ENCODE measurements at regions of chr4 and their contacts with region 1.

Region 1: GRCh38 chr4:89101256-89102161 is 9.8 kb upstream of the TIGD2 start:
- DNase-seq: no peak
- H3K4me3 Mint-ChIP-seq: no peak overlapping the region
- H3K27ac Mint-ChIP-seq: peak overlapping the region; percentile 48
- H3K4me1 Mint-ChIP-seq: peaks cover 25% of the 10 kb centered on the region
- H3K27me3 Mint-ChIP-seq: peaks cover 3% of the 10 kb centered on the region

Region 2: DNA sequence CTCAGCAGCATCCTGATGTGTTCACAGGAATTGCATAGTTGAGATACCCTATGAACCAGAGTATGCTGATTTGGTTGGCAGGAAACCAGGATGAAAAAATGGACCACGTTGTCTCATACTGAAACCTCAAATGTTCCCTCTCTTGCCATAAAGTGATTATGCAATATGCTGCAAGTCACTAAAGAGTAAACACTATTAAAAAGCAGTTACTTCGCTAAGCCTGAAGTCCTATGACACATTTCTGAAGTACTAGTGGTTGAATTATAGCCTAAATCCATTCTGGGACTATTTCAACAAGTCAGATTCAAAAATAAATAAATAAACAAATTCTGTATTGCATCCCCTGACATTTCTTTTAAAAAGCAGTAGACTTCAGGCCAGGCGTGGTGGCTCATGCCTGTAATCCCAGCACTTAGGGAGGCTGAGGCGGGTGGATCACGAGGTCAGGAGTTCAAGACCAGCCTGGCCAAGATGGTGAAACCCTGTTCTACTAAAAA is 297.9 kb before region 1 on chr4:
- CTCF ChIA-PET with region 1: no interaction called
- intact Hi-C with region 1: loop called (anchors 1 kb)
- DNase-seq: peak; percentile 60
- H3K4me3 Mint-ChIP-seq: no peak overlapping the region
- H3K27ac Mint-ChIP-seq: no peak overlapping the region
- H3K4me1 Mint-ChIP-seq: peaks cover 22% of the 10 kb centered on the region
- H3K27me3 Mint-ChIP-seq: no peaks in the 10 kb centered on the region

Region 3: GRCh38 chr4:89055157-89056080 is 46.1 kb before region 1 on chr4:
- CTCF ChIA-PET with region 1: no interaction called
- intact Hi-C with region 1: loop called (anchors 1 kb)
- DNase-seq: no peak
- H3K4me3 Mint-ChIP-seq: no peak overlapping the region
- H3K27ac Mint-ChIP-seq: no peak overlapping the region
- H3K4me1 Mint-ChIP-seq: peaks cover 32% of the 10 kb centered on the region
- H3K27me3 Mint-ChIP-seq: peaks cover 7% of the 10 kb centered on the region

Region 4: GRCh38 chr4:89077761-89078160 is 23.7 kb before region 1 on chr4:
- CTCF ChIA-PET with region 1: no interaction called
- intact Hi-C with region 1: loop called (anchors 1 kb)
- DNase-seq: no peak
- H3K4me3 Mint-ChIP-seq: no peak overlapping the region
- H3K27ac Mint-ChIP-seq: no peak overlapping the region
- H3K4me1 Mint-ChIP-seq: peaks cover 12% of the 10 kb centered on the region
- H3K27me3 Mint-ChIP-seq: peaks cover 8% of the 10 kb centered on the region

Region 5: DNA sequence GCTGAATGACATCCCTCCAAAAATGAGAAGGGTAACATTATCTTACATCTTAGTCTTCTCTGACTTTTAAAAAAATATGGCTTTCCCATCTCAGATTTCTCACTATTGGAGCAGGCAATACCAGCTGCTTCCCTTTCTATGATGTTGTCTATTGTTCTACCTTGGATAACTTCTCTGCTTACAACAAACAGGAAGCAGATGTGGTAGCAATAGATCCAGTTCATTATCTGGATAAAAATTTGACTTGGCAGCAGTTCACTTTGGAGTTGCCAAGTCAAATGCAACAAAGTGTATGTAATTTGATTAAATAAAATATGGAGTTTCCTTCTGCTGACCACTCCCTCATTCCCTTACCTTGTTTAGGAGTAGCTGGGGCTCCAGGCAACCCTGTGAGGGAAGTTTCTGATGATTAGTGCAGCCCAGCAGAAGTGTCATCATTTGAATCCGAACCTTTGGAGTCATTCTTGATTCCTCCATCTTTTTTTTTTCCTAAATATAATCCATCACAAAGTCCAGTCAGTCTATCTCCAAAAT is 278.1 kb after region 1 on chr4:
- CTCF ChIA-PET with region 1: no interaction called
- intact Hi-C with region 1: no loop called
- DNase-seq: no peak
- H3K4me3 Mint-ChIP-seq: no peak overlapping the region
- H3K27ac Mint-ChIP-seq: no peak overlapping the region
- H3K4me1 Mint-ChIP-seq: no peaks in the 10 kb centered on the region
- H3K27me3 Mint-ChIP-seq: no peaks in the 10 kb centered on the region